Naive thymus-derived CD4-positive, alpha-beta T cell (primary cell): ENCODE measurements at regions of chr20 and their contacts with region 1.

Region 1: GRCh38 chr20:1392823-1393506 is at the start of gene FKBP1A:
- DNase-seq: peak; percentile 80 to 92 (median 89)
- ATAC-seq: peak; percentile 96
- H3K4me3 ChIP-seq: peak within 1 kb of the TSS; percentile 74
- H3K4me3 Mint-ChIP-seq: peak within 1 kb of the TSS; percentile 79 to 98 (median 94)
- H3K27ac ChIP-seq: peak within 1 kb of the TSS; percentile 82
- H3K27ac Mint-ChIP-seq: peak within 1 kb of the TSS; percentile 91 to 99 (median 96)
- H3K4me1 ChIP-seq: peaks cover 39 to 44% of the 10 kb centered on the region in 2 donors
- H3K4me1 Mint-ChIP-seq: peaks cover 45 to 82% (median 75%) of the 10 kb centered on the region in 7 donors
- H3K27me3 ChIP-seq: no peaks in the 10 kb centered on the region
- H3K27me3 Mint-ChIP-seq: peaks cover 0 to 30% (median 0%) of the 10 kb centered on the region in 5 donors
- total RNA-seq, gene FKBP1A: 74.5 to 253 (median 93.1) TPM

Region 2: DNA sequence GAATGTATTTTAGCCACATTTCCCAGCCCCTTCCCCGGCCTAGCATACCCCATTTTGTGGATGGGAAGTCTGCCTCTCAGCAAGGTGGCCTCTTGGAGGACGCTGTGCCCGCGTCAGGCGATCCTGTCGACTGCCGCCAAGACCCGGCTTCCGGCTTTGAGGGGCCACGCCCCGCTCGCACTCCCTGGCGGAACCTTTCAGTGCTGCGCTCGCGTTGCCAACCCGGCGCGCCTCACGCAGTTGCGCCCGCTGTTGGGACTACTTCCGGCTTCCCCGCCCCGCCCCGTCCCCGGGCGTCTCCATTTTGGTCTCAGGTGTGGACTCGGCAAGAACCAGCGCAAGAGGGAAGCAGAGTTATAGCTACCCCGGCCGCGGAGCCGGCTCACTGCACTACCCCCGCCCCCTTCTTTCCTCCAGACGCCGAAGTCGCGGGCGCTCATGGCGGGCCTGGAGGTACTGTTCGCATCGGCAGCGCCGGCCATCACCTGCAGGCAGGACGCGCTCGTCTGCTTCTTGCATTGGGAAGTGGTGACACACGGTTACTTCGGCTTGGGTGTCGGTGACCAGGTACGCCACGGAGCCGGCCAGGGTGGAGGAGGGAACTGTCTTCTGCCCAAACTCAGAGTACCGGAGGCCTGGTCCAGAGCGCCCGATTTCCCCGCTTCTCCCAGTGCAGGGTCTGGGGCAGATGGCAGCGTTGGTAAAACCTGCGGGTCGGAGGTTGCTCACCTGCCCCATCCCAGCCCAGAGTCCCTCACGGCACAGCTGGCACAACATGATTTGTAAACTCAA is 274.4 kb before region 1 on chr20 and contains the start of gene PSMF1:
- CTCF ChIA-PET with region 1: no interaction called
- POLR2A ChIA-PET with region 1: no interaction called
- intact Hi-C with region 1: loop called in 1 of 2 experiments (anchors 5 kb)
- DNase-seq: peak; percentile 93 to 99 (median 96)
- ATAC-seq: peak; percentile 98
- H3K4me3 ChIP-seq: peak within 1 kb of the TSS; percentile 98
- H3K4me3 Mint-ChIP-seq: peak within 1 kb of the TSS; percentile 92 to 97 (median 94)
- H3K27ac ChIP-seq: peak within 1 kb of the TSS; percentile 85
- H3K27ac Mint-ChIP-seq: peak within 1 kb of the TSS; percentile 81 to 97 (median 94)
- H3K4me1 ChIP-seq: peaks cover 40 to 45% of the 10 kb centered on the region in 2 donors
- H3K4me1 Mint-ChIP-seq: peaks cover 46 to 68% (median 61%) of the 10 kb centered on the region in 7 donors
- H3K27me3 ChIP-seq: no peaks in the 10 kb centered on the region
- H3K27me3 Mint-ChIP-seq: no peaks in the 10 kb centered on the region
- total RNA-seq, gene PSMF1: 88.7 to 157 (median 114) TPM

Region 3: GRCh38 chr20:1313236-1313964 is 79.6 kb before region 1 on chr20:
- CTCF ChIA-PET with region 1: no interaction called
- POLR2A ChIA-PET with region 1: no interaction called
- intact Hi-C with region 1: loop called in 1 of 2 experiments (anchors 1 kb)
- DNase-seq: peak; percentile 41 to 69 (median 57)
- ATAC-seq: peak; percentile 85
- H3K4me3 ChIP-seq: no peak overlapping the region
- H3K4me3 Mint-ChIP-seq: peak overlapping the region in 2 of 10 donors; percentile 28 to 34
- H3K27ac ChIP-seq: no peak overlapping the region
- H3K27ac Mint-ChIP-seq: peak overlapping the region in 1 of 9 donors; percentile 48
- H3K4me1 ChIP-seq: peaks cover 5 to 7% of the 10 kb centered on the region in 2 donors
- H3K4me1 Mint-ChIP-seq: peaks cover 0 to 16% (median 4%) of the 10 kb centered on the region in 7 donors
- H3K27me3 ChIP-seq: no peaks in the 10 kb centered on the region
- H3K27me3 Mint-ChIP-seq: no peaks in the 10 kb centered on the region

Region 4: GRCh38 chr20:1336699-1337367 is 56.1 kb before region 1 on chr20:
- CTCF ChIA-PET with region 1: no interaction called
- POLR2A ChIA-PET with region 1: no interaction called
- intact Hi-C with region 1: loop called in 1 of 2 experiments (anchors 2 kb)
- DNase-seq: peak in 3 of 9 donors; percentile 22 to 33 (median 24)
- ATAC-seq: peak; percentile 54
- H3K4me3 ChIP-seq: no peak overlapping the region
- H3K4me3 Mint-ChIP-seq: peak overlapping the region; percentile 27 to 70 (median 56)
- H3K27ac ChIP-seq: peak overlapping the region; percentile 48
- H3K27ac Mint-ChIP-seq: peak overlapping the region; percentile 54 to 91 (median 78)
- H3K4me1 ChIP-seq: peaks cover 0 to 11% of the 10 kb centered on the region in 2 donors
- H3K4me1 Mint-ChIP-seq: peaks cover 15 to 46% (median 37%) of the 10 kb centered on the region in 7 donors
- H3K27me3 ChIP-seq: no peaks in the 10 kb centered on the region
- H3K27me3 Mint-ChIP-seq: no peaks in the 10 kb centered on the region

Region 5: GRCh38 chr20:1377984-1378734 is 14.8 kb before region 1 on chr20:
- CTCF ChIA-PET with region 1: interaction called, 3 read pairs
- POLR2A ChIA-PET with region 1: interaction called, 7 read pairs
- intact Hi-C with region 1: loop called (anchors 2 kb)
- DNase-seq: no peak
- ATAC-seq: no peak
- H3K4me3 ChIP-seq: no peak overlapping the region
- H3K4me3 Mint-ChIP-seq: peak overlapping the region in 8 of 10 donors; percentile 21 to 61 (median 46)
- H3K27ac ChIP-seq: peak overlapping the region; percentile 14
- H3K27ac Mint-ChIP-seq: peak overlapping the region; percentile 42 to 83 (median 65)
- H3K4me1 ChIP-seq: peaks cover 18 to 62% of the 10 kb centered on the region in 2 donors
- H3K4me1 Mint-ChIP-seq: peaks cover 73 to 97% (median 94%) of the 10 kb centered on the region in 7 donors
- H3K27me3 ChIP-seq: no peaks in the 10 kb centered on the region
- H3K27me3 Mint-ChIP-seq: no peaks in the 10 kb centered on the region

Region 6: GRCh38 chr20:1405801-1406200 is 12.8 kb after region 1 on chr20:
- CTCF ChIA-PET with region 1: no interaction called
- POLR2A ChIA-PET with region 1: no interaction called
- intact Hi-C with region 1: no loop called
- DNase-seq: no peak
- ATAC-seq: no peak
- H3K4me3 ChIP-seq: no peak overlapping the region
- H3K4me3 Mint-ChIP-seq: no peak overlapping the region
- H3K27ac ChIP-seq: no peak overlapping the region
- H3K27ac Mint-ChIP-seq: no peak overlapping the region
- H3K4me1 ChIP-seq: peaks cover 3 to 5% of the 10 kb centered on the region in 2 donors
- H3K4me1 Mint-ChIP-seq: peaks cover 0 to 16% (median 14%) of the 10 kb centered on the region in 7 donors
- H3K27me3 ChIP-seq: no peaks in the 10 kb centered on the region
- H3K27me3 Mint-ChIP-seq: peaks cover 0 to 22% (median 4%) of the 10 kb centered on the region in 5 donors

Region 7: DNA sequence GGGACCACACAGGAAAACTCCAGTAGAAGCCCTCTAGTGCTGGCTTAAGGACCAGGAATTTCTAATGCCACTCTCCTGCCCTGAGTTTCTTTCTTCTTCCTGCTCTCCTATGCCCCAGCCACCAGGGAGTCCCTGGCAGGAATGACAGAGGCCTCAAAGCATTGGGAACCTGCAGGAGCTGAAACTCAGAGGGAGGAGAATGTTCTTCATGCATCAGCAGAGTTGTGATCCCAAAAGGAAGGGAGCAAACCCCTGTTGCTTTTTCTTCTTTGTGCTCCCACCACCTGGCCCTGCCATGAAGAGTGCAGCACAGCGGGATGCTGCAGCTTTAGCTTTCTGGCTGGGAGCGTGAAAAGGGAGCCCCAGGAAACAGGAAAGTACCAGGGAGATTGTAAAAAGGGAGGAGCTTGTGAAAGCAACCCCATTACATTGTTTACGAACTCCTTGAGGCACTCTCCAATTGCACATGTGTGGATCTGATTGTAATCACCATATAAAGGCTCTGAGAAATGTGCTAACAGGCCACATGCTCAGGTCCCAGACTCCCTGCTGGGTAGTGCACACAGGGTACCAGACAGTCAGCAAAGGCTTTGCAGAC is 34.6 kb after region 1 on chr20:
- CTCF ChIA-PET with region 1: no interaction called
- POLR2A ChIA-PET with region 1: no interaction called
- intact Hi-C with region 1: no loop called
- DNase-seq: no peak
- ATAC-seq: no peak
- H3K4me3 ChIP-seq: no peak overlapping the region
- H3K4me3 Mint-ChIP-seq: no peak overlapping the region
- H3K27ac ChIP-seq: no peak overlapping the region
- H3K27ac Mint-ChIP-seq: no peak overlapping the region
- H3K4me1 ChIP-seq: no peaks in the 10 kb centered on the region
- H3K4me1 Mint-ChIP-seq: peaks cover 7 to 37% (median 10%) of the 10 kb centered on the region in 7 donors
- H3K27me3 ChIP-seq: peaks cover 0 to 4% of the 10 kb centered on the region in 2 donors
- H3K27me3 Mint-ChIP-seq: peaks cover 0 to 22% (median 0%) of the 10 kb centered on the region in 5 donors

Region 8: DNA sequence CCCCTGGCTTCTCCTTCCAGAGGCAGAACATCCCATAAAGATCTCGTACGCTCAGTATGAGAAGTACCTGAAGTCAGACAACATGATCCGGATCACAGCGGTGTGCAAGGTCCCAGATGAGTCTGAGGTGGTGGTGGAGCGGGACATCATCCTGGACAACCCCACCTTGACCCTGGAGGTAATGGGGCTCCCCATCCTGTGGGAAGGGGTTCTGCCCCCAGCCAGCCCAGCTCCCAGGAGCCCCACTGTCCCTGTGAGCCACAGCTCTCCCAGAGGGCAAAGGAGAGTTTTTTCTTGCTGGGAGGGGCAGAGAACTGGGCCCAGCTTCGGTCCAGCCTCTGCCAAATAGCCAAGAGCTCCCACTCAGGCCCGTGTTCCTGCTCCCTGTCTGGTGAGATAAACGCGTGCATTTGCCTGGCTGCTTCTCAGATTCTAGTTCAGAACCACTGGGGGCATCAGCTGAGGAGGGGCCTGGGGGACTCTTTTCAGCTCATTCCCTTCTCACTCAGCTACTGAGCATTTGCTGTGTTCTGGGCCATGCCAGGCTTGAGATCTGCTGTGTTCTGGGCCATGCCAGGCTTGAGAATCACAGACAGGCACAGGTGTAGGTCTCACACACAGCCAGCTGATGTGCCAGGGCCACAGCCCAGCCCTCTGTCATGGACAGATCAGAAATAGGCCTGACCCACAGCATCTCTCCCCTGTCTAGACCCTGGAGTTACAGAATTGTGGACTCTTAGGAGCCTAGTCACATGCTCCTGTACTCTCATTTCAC is 942.3 kb after region 1 on chr20:
- CTCF ChIA-PET with region 1: no interaction called
- POLR2A ChIA-PET with region 1: no interaction called
- intact Hi-C with region 1: no loop called
- DNase-seq: no peak
- ATAC-seq: no peak
- H3K4me3 ChIP-seq: no peak overlapping the region
- H3K4me3 Mint-ChIP-seq: no peak overlapping the region
- H3K27ac ChIP-seq: no peak overlapping the region
- H3K27ac Mint-ChIP-seq: no peak overlapping the region
- H3K4me1 ChIP-seq: no peaks in the 10 kb centered on the region
- H3K4me1 Mint-ChIP-seq: no peaks in the 10 kb centered on the region
- H3K27me3 ChIP-seq: no peaks in the 10 kb centered on the region
- H3K27me3 Mint-ChIP-seq: peaks cover 0 to 8% (median 5%) of the 10 kb centered on the region in 5 donors